ENCODE measurements at regions of chr18 and their contacts with region 1.

Region 1: GRCh38 chr18:46213295-46213694 is 109.1 kb downstream of the HAUS1 start:
- DNase-seq: peak; percentile 43
- H3K4me3 ChIP-seq: no peak overlapping the region
- H3K27ac ChIP-seq: no peak overlapping the region
- H3K4me1 ChIP-seq: peaks cover 21% of the 10 kb centered on the region
- H3K27me3 ChIP-seq: no peaks in the 10 kb centered on the region
- CTCF ChIP-seq: peak; percentile 68

Region 2: DNA sequence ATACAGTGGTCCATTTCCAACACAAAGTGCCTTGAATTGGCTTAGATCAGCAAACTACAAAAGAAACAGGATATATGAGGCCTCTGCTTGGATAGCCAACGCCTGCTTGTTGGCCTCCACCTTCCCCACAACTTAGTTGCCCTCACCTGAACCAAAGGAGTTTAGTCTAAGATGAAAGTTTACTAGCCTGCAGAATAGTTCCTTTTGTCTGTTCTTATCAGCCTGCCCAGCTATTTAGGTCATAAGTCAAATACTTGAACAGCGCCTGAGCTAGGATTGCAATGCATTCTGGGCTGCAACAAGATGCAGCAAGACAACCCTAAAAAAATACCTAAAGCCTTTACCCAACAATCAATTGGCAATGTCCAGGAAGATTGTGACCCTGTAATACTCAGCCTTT is 233.1 kb before region 1 on chr18:
- CTCF ChIA-PET with region 1: no interaction called
- POLR2A ChIA-PET with region 1: no interaction called
- intact Hi-C with region 1: no loop called
- DNase-seq: no peak
- H3K4me3 ChIP-seq: no peak overlapping the region
- H3K27ac ChIP-seq: no peak overlapping the region
- H3K4me1 ChIP-seq: no peaks in the 10 kb centered on the region
- H3K27me3 ChIP-seq: no peaks in the 10 kb centered on the region
- CTCF ChIP-seq: no peak

Region 3: DNA sequence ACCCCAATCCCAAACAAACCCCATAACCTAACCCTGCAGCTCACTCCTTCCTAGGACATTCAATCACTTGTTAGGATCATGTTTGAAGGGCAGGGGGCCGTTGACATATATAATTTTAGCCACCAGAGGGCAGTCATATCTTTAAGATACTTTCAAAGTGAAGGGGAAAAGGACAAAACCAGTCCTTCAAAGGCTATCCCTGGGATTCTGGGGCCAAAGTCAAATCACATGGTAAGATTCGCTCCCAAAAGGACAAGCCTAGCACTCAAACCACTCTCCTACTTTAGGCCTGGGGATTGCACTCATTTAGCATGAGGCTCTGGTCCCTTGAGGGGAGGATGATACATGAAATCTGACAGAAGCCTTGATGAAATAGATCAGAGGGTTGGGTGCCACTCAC is 64.5 kb before region 1 on chr18:
- CTCF ChIA-PET with region 1: no interaction called
- POLR2A ChIA-PET with region 1: no interaction called
- intact Hi-C with region 1: loop called (anchors 2 kb)
- DNase-seq: peak; percentile 73
- H3K4me3 ChIP-seq: no peak overlapping the region
- H3K27ac ChIP-seq: no peak overlapping the region
- H3K4me1 ChIP-seq: no peaks in the 10 kb centered on the region
- H3K27me3 ChIP-seq: no peaks in the 10 kb centered on the region
- CTCF ChIP-seq: peak; percentile 74

Region 4: GRCh38 chr18:46464926-46465655 is 251.8 kb after region 1 on chr18:
- CTCF ChIA-PET with region 1: no interaction called
- POLR2A ChIA-PET with region 1: no interaction called
- intact Hi-C with region 1: no loop called
- DNase-seq: no peak
- H3K4me3 ChIP-seq: no peak overlapping the region
- H3K27ac ChIP-seq: no peak overlapping the region
- H3K4me1 ChIP-seq: peaks cover 23% of the 10 kb centered on the region
- H3K27me3 ChIP-seq: no peaks in the 10 kb centered on the region
- CTCF ChIP-seq: peak; percentile 36